ENCODE measurements at regions of chr5 and their contacts with region 1.

Region 1: DNA sequence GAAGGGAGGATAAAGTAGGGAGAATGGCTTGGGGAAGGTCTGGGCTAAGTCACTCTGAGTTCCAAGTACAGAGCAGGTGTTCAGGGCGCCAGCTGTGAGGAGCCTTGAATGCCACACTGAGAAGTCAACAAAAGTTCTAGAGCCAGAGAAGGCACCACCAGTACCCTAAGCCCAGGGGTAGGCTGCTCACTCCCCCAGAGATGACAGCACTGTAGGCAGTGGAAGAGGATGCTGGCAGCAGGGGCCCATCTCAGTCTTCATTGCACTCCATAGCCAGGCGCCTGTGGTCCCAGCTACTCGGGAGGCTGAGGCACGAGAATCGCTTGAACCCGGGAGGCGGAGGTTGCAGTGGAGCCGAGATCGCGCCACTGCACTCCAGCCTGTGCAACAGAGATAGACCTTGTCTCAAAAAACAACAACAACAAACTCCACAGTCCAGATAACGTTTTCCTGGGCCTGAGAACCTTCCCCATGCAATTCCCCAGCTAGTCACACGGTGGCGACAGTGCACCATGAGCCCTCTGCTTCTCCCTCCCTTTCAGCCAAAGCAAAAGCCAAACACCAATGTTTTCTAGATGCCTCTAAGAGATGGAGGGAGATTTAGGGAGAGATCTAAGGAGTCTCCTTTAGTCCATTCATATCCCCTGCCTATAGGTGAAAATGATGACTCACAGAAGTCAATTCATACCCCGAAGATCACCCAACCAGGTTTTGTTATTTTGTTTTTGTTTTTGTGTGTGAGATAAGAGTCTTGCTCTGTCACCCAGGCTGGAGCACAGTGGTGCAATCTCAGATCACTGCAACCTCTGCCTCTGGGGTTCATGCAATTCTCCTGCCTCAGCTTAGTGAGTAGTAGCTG is 19.8 kb upstream of the NSD1 start:
- DNase-seq: peak; percentile 55
- ATAC-seq: peak; percentile 76
- H3K4me3 ChIP-seq: no peak overlapping the region
- H3K27ac ChIP-seq: no peak overlapping the region
- H3K4me1 ChIP-seq: no peaks in the 10 kb centered on the region; a peak in 1 of 4 replicates
- H3K27me3 ChIP-seq: no peaks in the 10 kb centered on the region
- CTCF ChIP-seq: peak; percentile 93 to 99 (median 98)
- POLR2A ChIP-seq: no peak
- RAD21 ChIP-seq: peak; percentile 99

Region 2: GRCh38 chr5:176700239-176700847 is 413.5 kb before region 1 on chr5:
- CTCF ChIA-PET with region 1: interaction called, 3 read pairs
- POLR2A ChIA-PET with region 1: no interaction called
- RAD21 ChIA-PET with region 1: no interaction called
- intact Hi-C with region 1: loop called (anchors 5 kb)
- DNase-seq: no peak
- ATAC-seq: peak; percentile 88
- H3K4me3 ChIP-seq: no peak overlapping the region
- H3K27ac ChIP-seq: no peak overlapping the region
- H3K4me1 ChIP-seq: no peaks in the 10 kb centered on the region
- H3K27me3 ChIP-seq: no peaks in the 10 kb centered on the region
- CTCF ChIP-seq: peak; percentile 52 to 69 (median 65); a peak in 5 of 6 replicates
- POLR2A ChIP-seq: no peak
- RAD21 ChIP-seq: peak; percentile 83

Region 3: GRCh38 chr5:177086924-177087706 is 26.7 kb before region 1 on chr5:
- CTCF ChIA-PET with region 1: interaction called, 15 read pairs
- POLR2A ChIA-PET with region 1: interaction called, 3 read pairs
- RAD21 ChIA-PET with region 1: interaction called, 4 to 5 read pairs
- intact Hi-C with region 1: no loop called
- DNase-seq: peak; percentile 61
- ATAC-seq: peak; percentile 89
- H3K4me3 ChIP-seq: peak overlapping the region; percentile 77 to 96
- H3K27ac ChIP-seq: peak overlapping the region; percentile 80
- H3K4me1 ChIP-seq: peaks cover 6 to 13% of the 10 kb centered on the region in 2 experiments; a peak in 3 of 4 replicates
- H3K27me3 ChIP-seq: no peaks in the 10 kb centered on the region
- CTCF ChIP-seq: peak in 2 of 3 experiments; percentile 79 to 92; a peak in 5 of 6 replicates
- POLR2A ChIP-seq: peak; percentile 52
- RAD21 ChIP-seq: no peak; the same call in 1 of the 2 replicates

Region 4: DNA sequence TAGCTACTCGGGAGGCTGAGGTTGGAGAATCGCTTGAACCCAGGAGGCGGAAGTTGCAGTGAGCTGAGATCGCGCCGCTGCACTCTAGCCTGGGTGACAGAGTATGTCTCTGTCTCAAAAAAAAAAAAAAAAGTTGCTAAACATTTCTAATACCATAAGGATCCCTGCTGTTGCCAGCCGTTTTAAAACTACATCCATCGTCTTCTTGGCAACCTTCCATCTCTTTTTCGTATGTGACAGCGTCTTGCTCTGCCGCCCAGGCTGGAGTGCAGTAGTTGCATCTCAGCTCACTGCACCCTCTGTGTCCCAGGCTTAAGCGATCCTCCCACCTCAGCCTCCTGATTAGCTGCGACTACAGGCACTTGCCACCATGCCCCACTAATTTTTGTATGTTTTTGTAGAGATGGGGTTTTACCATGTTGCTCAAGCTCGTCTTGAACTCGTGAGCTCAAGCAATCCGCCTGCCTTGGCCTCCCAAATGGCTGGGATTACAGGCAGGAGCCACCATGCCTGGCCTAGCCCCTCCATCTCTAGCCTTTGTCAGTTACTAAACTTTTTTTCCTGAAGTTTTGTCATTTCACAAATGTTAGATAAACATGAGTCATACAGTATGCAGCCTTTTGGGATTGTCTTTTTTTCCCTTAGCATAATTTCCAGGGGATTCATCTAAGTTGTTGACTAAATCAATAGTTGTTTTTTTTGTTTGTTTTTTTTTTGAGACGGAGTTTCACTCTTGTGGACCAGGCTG is 33.3 kb after region 1 on chr5:
- CTCF ChIA-PET with region 1: no interaction called
- POLR2A ChIA-PET with region 1: no interaction called
- RAD21 ChIA-PET with region 1: no interaction called
- intact Hi-C with region 1: no loop called
- DNase-seq: no peak
- ATAC-seq: no peak
- H3K4me3 ChIP-seq: no peak overlapping the region
- H3K27ac ChIP-seq: no peak overlapping the region
- H3K4me1 ChIP-seq: no peaks in the 10 kb centered on the region
- H3K27me3 ChIP-seq: no peaks in the 10 kb centered on the region
- CTCF ChIP-seq: no peak
- POLR2A ChIP-seq: no peak
- RAD21 ChIP-seq: no peak

Region 5: GRCh38 chr5:177311723-177312648 is 198.2 kb after region 1 on chr5 and contains the start of gene MXD3:
- CTCF ChIA-PET with region 1: interaction called, 18 read pairs
- POLR2A ChIA-PET with region 1: no interaction called
- RAD21 ChIA-PET with region 1: interaction called, 4 to 5 read pairs
- intact Hi-C with region 1: no loop called
- DNase-seq: peak; percentile 91
- ATAC-seq: peak; percentile 77
- H3K4me3 ChIP-seq: peak within 1 kb of the TSS; percentile 82 to 87
- H3K27ac ChIP-seq: peak within 1 kb of the TSS; percentile 82
- H3K4me1 ChIP-seq: peaks cover 18 to 45% of the 10 kb centered on the region in 2 experiments
- H3K27me3 ChIP-seq: no peaks in the 10 kb centered on the region
- CTCF ChIP-seq: no peak
- POLR2A ChIP-seq: no peak
- RAD21 ChIP-seq: no peak
- total RNA-seq, gene MXD3: 37.6 TPM

Region 6: GRCh38 chr5:177370488-177371119 is 256.8 kb after region 1 on chr5:
- CTCF ChIA-PET with region 1: interaction called, 10 read pairs
- POLR2A ChIA-PET with region 1: no interaction called
- RAD21 ChIA-PET with region 1: no interaction called
- intact Hi-C with region 1: no loop called
- DNase-seq: peak; percentile 94
- ATAC-seq: peak; percentile 90
- H3K4me3 ChIP-seq: peak overlapping the region; percentile 74 to 78
- H3K27ac ChIP-seq: peak overlapping the region; percentile 70
- H3K4me1 ChIP-seq: peaks cover 22 to 48% of the 10 kb centered on the region in 2 experiments
- H3K27me3 ChIP-seq: no peaks in the 10 kb centered on the region
- CTCF ChIP-seq: peak in 2 of 3 experiments; percentile 58 to 65; a peak in 4 of 6 replicates
- POLR2A ChIP-seq: no peak
- RAD21 ChIP-seq: no peak

Region 7: DNA sequence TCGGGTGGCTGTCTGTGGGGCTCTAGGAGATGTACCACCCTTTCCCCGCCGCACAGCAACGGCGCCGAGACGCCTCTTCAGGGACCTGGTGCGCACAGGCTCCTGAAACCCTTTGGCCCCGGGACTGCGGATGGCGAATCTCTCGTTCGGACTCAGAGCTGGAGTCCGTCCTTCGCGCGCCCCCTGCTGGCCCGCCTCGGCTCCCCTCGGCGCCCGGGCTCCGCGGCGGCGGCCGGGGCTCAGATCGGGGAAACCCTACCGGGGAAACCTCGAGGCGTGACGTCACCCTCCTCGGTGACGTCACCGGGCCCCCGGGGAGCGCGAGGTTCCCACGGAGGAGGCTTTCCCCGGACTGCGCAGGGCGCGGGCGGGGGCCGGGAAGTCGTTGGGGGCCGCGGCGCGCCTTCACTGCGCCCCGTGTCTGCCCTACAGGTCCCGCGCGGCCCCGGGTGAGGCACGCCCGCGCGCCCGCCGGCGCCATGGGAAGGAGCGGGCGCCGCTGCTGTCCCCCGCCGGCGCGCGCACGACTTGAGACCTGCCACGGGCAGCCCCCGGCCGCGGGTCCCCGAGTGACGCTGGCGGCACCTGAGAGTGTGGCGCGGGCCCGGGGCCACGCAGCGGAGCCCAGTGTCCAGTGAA is 340.7 kb after region 1 on chr5:
- CTCF ChIA-PET with region 1: interaction called, 6 read pairs
- POLR2A ChIA-PET with region 1: no interaction called
- RAD21 ChIA-PET with region 1: no interaction called
- intact Hi-C with region 1: loop called (anchors 2 kb)
- DNase-seq: peak; percentile 62
- ATAC-seq: peak; percentile 52
- H3K4me3 ChIP-seq: peak overlapping the region; percentile 68 to 76
- H3K27ac ChIP-seq: peak overlapping the region; percentile 96
- H3K4me1 ChIP-seq: peaks cover 18 to 60% of the 10 kb centered on the region in 2 experiments; a peak in 3 of 4 replicates
- H3K27me3 ChIP-seq: no peaks in the 10 kb centered on the region
- CTCF ChIP-seq: peak in 2 of 3 experiments; percentile 76 to 95; a peak in 4 of 6 replicates
- POLR2A ChIP-seq: no peak
- RAD21 ChIP-seq: no peak

Measured in HCT116 (cell line).